ENCODE measurements at regions of chr1 and their contacts with region 1.

Region 1: GRCh38 chr1:184805667-184806295 is 51.1 kb upstream of the EDEM3 start:
- DNase-seq: peak; percentile 88
- H3K4me3 Mint-ChIP-seq: no peak overlapping the region
- H3K27ac Mint-ChIP-seq: no peak overlapping the region
- H3K4me1 Mint-ChIP-seq: peaks cover 6% of the 10 kb centered on the region
- H3K27me3 Mint-ChIP-seq: no peaks in the 10 kb centered on the region

Region 2: DNA sequence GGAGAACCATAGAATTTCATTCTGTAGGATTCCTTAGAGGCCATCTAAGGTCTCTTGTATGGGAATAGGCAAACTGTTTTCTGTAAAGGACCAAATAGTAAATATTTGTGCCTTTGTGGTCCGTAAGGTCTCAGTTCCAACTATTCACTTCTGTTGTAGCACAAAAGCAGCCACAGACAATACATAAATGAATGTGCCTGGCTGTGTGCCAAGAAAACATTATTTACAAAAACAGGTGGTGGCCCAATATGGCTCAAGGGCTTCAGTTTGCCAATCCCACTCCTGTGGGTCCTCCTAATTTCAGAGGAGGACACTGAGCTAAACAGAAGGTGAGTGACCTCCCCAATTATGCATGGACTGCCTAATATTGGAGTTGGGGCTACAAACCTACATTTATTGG is 16.5 kb after region 1 on chr1:
- CTCF ChIA-PET with region 1: interaction called, 12 read pairs
- POLR2A ChIA-PET with region 1: no interaction called
- intact Hi-C with region 1: no loop called
- DNase-seq: no peak
- H3K4me3 Mint-ChIP-seq: no peak overlapping the region
- H3K27ac Mint-ChIP-seq: no peak overlapping the region
- H3K4me1 Mint-ChIP-seq: peaks cover 10% of the 10 kb centered on the region
- H3K27me3 Mint-ChIP-seq: no peaks in the 10 kb centered on the region

Region 3: DNA sequence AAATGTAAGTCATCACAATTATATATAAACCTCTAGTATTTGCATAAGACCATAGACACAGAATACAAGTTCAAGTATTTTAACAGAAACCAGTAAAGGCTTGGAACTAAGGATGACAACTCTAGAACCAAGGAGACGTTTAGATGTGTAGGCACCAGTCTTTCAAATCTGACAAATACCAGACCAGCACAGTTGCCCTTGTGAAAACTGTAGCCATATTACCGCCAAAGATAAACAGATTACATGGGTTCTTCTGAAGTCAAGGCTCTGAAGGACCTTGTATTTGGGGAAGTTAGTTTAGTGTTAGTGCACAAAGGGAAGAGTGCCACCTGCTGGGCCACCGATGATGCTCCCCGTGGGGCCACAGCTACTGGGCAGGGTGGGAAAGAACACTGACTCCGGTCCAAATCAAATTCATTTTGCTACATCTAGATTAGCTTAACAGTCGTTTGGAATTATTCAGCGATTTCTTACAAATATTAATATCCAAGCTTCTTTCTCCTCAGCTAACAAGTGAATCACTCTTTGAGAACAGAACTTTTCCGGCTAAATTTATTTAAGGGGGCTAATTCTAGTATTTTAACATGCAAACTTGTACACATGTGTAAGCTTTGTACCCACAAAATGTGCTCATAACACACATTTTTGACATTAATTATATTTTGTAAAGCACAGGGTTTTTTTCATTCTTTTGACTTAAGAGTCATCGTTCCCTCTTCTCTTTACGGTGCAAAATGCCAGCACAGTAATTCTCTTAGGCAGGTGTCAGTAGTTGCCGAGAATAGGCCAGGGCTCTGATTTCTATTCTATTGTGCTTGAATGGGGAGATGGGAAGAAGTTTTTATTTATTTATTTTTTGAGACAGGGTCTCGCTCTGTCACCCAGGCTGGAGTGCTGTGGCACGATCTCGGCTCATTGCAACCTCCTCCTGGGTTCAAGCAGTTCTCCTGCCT is 176.5 kb after region 1 on chr1:
- CTCF ChIA-PET with region 1: interaction called, 362 read pairs
- POLR2A ChIA-PET with region 1: interaction called, 4 read pairs
- intact Hi-C with region 1: loop called (anchors 1 kb)
- DNase-seq: peak; percentile 85
- H3K4me3 Mint-ChIP-seq: no peak overlapping the region
- H3K27ac Mint-ChIP-seq: no peak overlapping the region
- H3K4me1 Mint-ChIP-seq: no peaks in the 10 kb centered on the region
- H3K27me3 Mint-ChIP-seq: peaks cover 4% of the 10 kb centered on the region

Region 4: GRCh38 chr1:185170291-185170848 is 364.6 kb after region 1 on chr1:
- CTCF ChIA-PET with region 1: interaction called, 32 read pairs
- POLR2A ChIA-PET with region 1: no interaction called
- intact Hi-C with region 1: loop called (anchors 1 kb)
- DNase-seq: peak; percentile 33
- H3K4me3 Mint-ChIP-seq: no peak overlapping the region
- H3K27ac Mint-ChIP-seq: no peak overlapping the region
- H3K4me1 Mint-ChIP-seq: peaks cover 5% of the 10 kb centered on the region
- H3K27me3 Mint-ChIP-seq: no peaks in the 10 kb centered on the region

Region 5: GRCh38 chr1:185670187-185670627 is 864.4 kb after region 1 on chr1:
- CTCF ChIA-PET with region 1: no interaction called
- POLR2A ChIA-PET with region 1: no interaction called
- intact Hi-C with region 1: loop called (anchors 10 kb)
- DNase-seq: peak; percentile 57
- H3K4me3 Mint-ChIP-seq: no peak overlapping the region
- H3K27ac Mint-ChIP-seq: no peak overlapping the region
- H3K4me1 Mint-ChIP-seq: peaks cover 15% of the 10 kb centered on the region
- H3K27me3 Mint-ChIP-seq: no peaks in the 10 kb centered on the region

Measured in activated CD4-positive, alpha-beta memory T cell treated with anti-CD3 and anti-CD28 coated beads for 36 hours (primary cell).